ENCODE measurements at regions of chrX and their contacts with region 1.

Region 1: DNA sequence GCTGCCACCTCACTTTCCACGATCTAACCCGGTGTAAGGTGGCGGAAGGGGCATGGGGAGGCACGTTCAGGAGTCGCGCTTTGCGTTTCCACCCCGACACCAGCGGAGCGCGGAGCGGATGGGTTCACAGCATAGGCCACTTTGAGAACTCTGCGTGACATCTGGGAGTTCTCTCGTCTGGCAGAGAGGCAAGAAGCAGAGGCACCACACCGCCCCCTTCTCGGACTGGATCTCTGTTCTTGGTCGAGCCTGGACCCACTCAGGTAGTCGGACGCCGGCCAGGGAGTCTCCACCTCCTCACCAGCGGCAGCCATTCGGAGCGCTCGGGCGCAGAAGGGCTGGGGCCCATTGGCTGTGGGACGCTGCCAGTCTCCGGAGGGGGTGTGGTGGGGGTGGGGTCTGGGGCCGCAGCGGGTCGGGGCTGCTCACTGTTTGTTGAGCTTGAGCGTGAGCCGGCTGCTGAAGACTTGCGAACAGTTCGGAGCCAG is at the start of gene DACH2:
- ATAC-seq: peak; percentile 95 to 99 (median 98)
- H3K4me3 ChIP-seq: peak within 1 kb of the TSS; percentile 43 to 68 (median 53)
- H3K27ac ChIP-seq: no peak within 1 kb of the TSS
- H3K4me1 ChIP-seq: no peaks in the 10 kb centered on the region
- total RNA-seq, gene DACH2: 0.35 to 14.6 (median 12.6) TPM in 7 of 8 experiments, not detected in the other

Region 2: GRCh38 chrX:85590638-85591037 is 557.4 kb before region 1 on chrX:
- in situ Hi-C with region 1: no loop called
- ATAC-seq: no peak
- H3K4me3 ChIP-seq: no peak overlapping the region
- H3K27ac ChIP-seq: no peak overlapping the region
- H3K4me1 ChIP-seq: no peaks in the 10 kb centered on the region

Region 3: DNA sequence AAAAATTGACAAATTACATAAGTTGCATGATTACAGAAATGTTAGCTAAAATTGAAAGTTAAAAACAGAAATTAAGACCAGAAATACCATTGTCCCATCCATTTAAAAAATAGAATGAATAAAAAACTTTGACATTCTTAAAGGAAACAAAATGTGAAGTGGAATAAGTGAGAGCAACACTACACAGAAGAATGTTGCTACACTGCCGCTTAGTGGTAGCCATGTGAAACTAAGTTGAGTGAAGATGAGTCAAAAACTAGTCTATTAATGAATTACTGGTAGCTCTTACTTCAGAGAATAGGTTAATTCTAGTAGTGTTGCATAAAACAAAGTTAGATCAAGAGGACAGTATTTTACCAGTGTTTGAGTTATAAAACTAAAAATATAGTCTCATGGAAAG is 798.5 kb after region 1 on chrX:
- in situ Hi-C with region 1: loop called in 1 of 9 experiments (anchors 25 kb)
- ATAC-seq: peak in 2 of 8 experiments; percentile 23 to 41
- H3K4me3 ChIP-seq: no peak overlapping the region
- H3K27ac ChIP-seq: no peak overlapping the region
- H3K4me1 ChIP-seq: no peaks in the 10 kb centered on the region

Region 4: GRCh38 chrX:87583679-87584078 is 1435.6 kb after region 1 on chrX:
- in situ Hi-C with region 1: no loop called
- ATAC-seq: no peak
- H3K4me3 ChIP-seq: no peak overlapping the region
- H3K27ac ChIP-seq: no peak overlapping the region
- H3K4me1 ChIP-seq: no peaks in the 10 kb centered on the region

Measured in motor neuron (in vitro differentiated cells).